Activated T-helper 2 cell treated with anti-CD3 and anti-CD28 coated beads, Interferon-gamma antibody, Interleukin-2, Interleukin-4, amounts not matched to agents 10 μg/mL and 5 μg/mL and 100 μg/mL, durations not matched to agents 14 hours and 24 hours and 36 hours (primary cell): ENCODE measurements at regions of chr11 and their contacts with region 1.

Region 1: GRCh38 chr11:59158206-59159068 is 13.5 kb upstream of the DTX4 start:
- DNase-seq: peak; percentile 47
- H3K4me3 Mint-ChIP-seq: no peak overlapping the region
- H3K27ac Mint-ChIP-seq: no peak overlapping the region
- H3K4me1 Mint-ChIP-seq: peaks cover 13% of the 10 kb centered on the region
- H3K27me3 Mint-ChIP-seq: peaks cover 8% of the 10 kb centered on the region

Region 2: DNA sequence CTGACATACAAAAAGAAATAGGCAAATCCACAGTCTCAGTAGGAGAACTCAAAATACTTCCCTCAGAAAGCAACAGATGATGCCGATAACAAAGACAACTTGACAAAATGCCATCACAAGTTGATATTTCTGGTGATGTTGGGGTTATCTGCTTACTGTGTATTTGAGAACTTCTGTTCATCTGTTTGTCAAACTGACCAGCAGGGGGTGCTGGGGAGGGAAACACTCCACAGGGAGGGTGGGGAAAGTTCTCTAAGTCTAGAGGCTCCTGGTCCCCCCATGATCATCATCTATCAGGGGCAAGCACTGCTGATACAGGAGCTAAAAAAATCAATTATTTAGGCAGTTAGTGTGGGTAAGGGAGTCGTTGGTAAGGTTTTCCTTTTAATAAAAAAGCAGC is 199.9 kb before region 1 on chr11:
- intact Hi-C with region 1: loop called (anchors 10 kb)
- DNase-seq: no peak
- H3K4me3 Mint-ChIP-seq: no peak overlapping the region
- H3K27ac Mint-ChIP-seq: no peak overlapping the region
- H3K4me1 Mint-ChIP-seq: peaks cover 4% of the 10 kb centered on the region
- H3K27me3 Mint-ChIP-seq: peaks cover 5% of the 10 kb centered on the region

Region 3: DNA sequence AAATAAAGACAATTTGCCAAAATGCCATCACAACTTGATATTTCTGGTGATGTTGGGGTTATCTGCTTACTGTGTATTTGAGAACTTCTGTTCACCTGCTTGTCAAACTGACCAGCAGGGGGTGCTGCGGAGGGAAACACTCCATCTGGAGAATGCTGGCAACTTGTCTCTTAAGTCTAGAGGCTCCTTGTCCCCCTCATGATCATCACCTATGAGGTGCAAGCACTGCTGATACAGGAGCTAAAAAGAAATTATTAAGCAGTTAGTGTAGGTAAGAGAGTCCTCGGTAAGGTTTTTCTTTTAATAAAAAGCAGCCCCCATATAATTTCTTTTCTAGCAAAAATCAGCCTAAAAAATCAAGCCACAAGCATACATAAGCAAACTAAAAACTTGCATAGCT is 105.0 kb before region 1 on chr11:
- intact Hi-C with region 1: loop called (anchors 1 kb)
- DNase-seq: peak; percentile 54
- H3K4me3 Mint-ChIP-seq: no peak overlapping the region
- H3K27ac Mint-ChIP-seq: no peak overlapping the region
- H3K4me1 Mint-ChIP-seq: peaks cover 4% of the 10 kb centered on the region
- H3K27me3 Mint-ChIP-seq: peaks cover 23% of the 10 kb centered on the region

Region 4: DNA sequence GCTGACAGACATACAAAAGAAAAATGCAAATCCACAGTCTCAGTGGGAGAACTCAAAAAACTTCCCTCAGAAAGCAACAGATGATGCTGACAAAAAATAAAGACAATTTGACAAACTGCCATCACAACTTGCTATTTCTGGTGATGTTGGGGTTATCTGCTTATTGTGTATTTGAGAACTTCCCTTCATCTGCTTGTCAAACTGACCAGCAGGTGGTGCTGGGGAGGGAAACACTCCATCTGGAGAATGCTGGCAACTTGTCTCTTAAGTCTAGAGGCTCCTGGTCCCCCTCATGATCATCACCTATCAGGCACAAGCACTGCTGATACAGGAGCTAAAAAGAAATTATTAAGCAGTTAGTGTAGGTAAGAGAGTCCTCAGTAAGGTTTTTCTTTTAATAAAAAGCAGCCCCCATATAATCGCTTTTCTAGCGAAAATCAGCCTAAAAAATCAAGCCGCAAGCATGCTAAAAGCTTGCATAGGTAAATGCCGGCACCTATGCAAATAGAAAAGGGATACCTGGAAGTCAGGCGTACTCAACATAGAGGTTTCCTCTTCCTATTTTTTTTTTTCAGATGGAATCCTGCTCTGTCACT is 61.2 kb before region 1 on chr11:
- intact Hi-C with region 1: loop called (anchors 1 kb)
- DNase-seq: peak; percentile 40
- H3K4me3 Mint-ChIP-seq: no peak overlapping the region
- H3K27ac Mint-ChIP-seq: no peak overlapping the region
- H3K4me1 Mint-ChIP-seq: peaks cover 7% of the 10 kb centered on the region
- H3K27me3 Mint-ChIP-seq: peaks cover 15% of the 10 kb centered on the region

Region 5: DNA sequence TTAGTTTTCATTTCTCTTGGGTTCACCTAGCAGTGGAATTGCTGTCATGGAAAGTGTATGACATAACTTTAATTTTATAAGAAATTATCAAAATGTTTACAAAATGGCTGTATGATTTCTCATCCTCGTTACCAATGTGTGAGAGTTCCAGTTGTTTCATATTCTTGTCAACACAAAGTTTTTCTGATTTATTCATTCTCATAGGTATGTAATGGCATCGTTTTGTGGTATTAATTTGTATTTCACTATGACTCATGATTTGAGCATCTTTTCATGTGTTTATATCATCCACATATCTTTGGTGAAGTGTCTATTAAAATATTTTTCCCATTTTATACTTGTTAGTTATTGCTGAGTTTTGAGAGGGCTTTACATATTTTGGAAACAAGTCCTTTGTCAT is 45.9 kb before region 1 on chr11:
- intact Hi-C with region 1: no loop called
- DNase-seq: no peak
- H3K4me3 Mint-ChIP-seq: no peak overlapping the region
- H3K27ac Mint-ChIP-seq: no peak overlapping the region
- H3K4me1 Mint-ChIP-seq: peaks cover 49% of the 10 kb centered on the region
- H3K27me3 Mint-ChIP-seq: no peaks in the 10 kb centered on the region

Region 6: GRCh38 chr11:59142530-59143507 is 15.6 kb before region 1 on chr11 and contains the start of gene FAM111A:
- intact Hi-C with region 1: loop called (anchors 2 kb)
- DNase-seq: peak; percentile 87
- H3K4me3 Mint-ChIP-seq: peak within 1 kb of the TSS; percentile 94
- H3K27ac Mint-ChIP-seq: peak within 1 kb of the TSS; percentile 95
- H3K4me1 Mint-ChIP-seq: peaks cover 57% of the 10 kb centered on the region
- H3K27me3 Mint-ChIP-seq: no peaks in the 10 kb centered on the region
- total RNA-seq, gene FAM111A: 66.2 and 69.1 TPM in 2 replicates